B cell (primary cell): ENCODE measurements at regions of chr20 and their contacts with region 1.

Region 1: GRCh38 chr20:63864847-63865640 is at the start of gene TPD52L2:
- DNase-seq: peak; percentile 98
- ATAC-seq: peak; percentile 82
- H3K4me3 ChIP-seq: peak within 1 kb of the TSS; percentile 69 to 97 (median 86)
- H3K4me3 Mint-ChIP-seq: peak within 1 kb of the TSS; percentile 94
- H3K27ac ChIP-seq: peak within 1 kb of the TSS; percentile 89 to 90
- H3K27ac Mint-ChIP-seq: peak within 1 kb of the TSS; percentile 97
- H3K4me1 ChIP-seq: peaks cover 16 to 20% of the 10 kb centered on the region in 2 donors
- H3K4me1 Mint-ChIP-seq: peaks cover 23% of the 10 kb centered on the region
- H3K27me3 ChIP-seq: no peaks in the 10 kb centered on the region
- H3K27me3 Mint-ChIP-seq: no peaks in the 10 kb centered on the region
- CTCF ChIP-seq: no peak
- total RNA-seq, gene TPD52L2: 41.1 and 41.3 TPM in 2 replicates

Region 2: DNA sequence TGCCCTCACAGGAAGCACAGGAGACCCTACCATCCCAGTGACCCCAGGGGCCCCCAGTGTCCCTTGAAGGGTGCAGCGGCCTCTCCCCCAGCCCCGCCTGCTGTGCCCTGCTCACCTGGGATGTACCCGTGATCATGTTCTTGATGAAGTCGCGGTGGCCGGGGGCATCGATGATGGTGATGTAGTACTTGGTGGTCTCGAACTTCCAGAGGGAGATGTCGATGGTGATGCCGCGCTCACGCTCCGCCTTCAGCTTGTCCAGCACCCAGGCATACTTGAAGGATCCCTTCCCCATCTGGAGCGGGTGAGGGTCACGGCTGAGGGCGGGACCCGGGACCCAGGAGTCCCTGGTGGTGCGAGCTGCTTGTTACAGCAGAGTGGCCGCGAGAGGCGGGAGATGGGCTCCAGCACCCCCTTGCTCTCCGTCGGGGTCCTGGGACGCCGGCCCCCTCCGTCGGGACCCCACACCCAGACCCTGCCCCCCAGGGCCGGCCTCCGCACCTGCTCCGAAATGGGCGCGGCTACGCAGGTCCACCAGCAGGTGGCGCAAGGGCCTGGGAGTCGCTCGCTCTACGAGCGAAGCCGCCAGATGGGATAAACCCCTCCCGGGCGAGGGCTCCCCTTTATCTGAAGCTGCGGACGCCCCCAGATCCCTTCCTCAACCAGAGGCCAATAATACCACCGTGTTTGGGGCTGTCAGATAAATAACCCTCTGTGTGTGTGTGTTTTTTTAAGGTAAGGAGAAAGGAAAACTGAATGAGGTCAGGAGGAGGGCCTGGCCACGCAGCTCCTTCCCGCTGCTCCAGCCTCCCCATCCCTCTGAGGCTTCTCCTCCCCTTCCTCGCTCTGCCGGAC is 369.1 kb before region 1 on chr20:
- CTCF ChIA-PET with region 1: interaction called, 16 read pairs
- POLR2A ChIA-PET with region 1: no interaction called
- intact Hi-C with region 1: loop called (anchors 1 kb)
- DNase-seq: peak; percentile 84
- ATAC-seq: peak; percentile 66
- H3K4me3 ChIP-seq: peak overlapping the region in 4 of 5 experiments; percentile 8 to 40 (median 34)
- H3K4me3 Mint-ChIP-seq: peak overlapping the region; percentile 79
- H3K27ac ChIP-seq: no peak overlapping the region
- H3K27ac Mint-ChIP-seq: no peak overlapping the region
- H3K4me1 ChIP-seq: peaks cover 19 to 26% of the 10 kb centered on the region in 2 donors
- H3K4me1 Mint-ChIP-seq: peaks cover 7% of the 10 kb centered on the region
- H3K27me3 ChIP-seq: peaks cover 0 to 40% (median 16%) of the 10 kb centered on the region in 4 experiments
- H3K27me3 Mint-ChIP-seq: peaks cover 11% of the 10 kb centered on the region
- CTCF ChIP-seq: peak; percentile 95

Region 3: GRCh38 chr20:63553227-63553932 is 311.7 kb before region 1 on chr20:
- CTCF ChIA-PET with region 1: no interaction called
- POLR2A ChIA-PET with region 1: no interaction called
- intact Hi-C with region 1: loop called (anchors 1 kb)
- DNase-seq: peak; percentile 96
- ATAC-seq: peak; percentile 75
- H3K4me3 ChIP-seq: peak overlapping the region; percentile 7 to 89 (median 75)
- H3K4me3 Mint-ChIP-seq: peak overlapping the region; percentile 86
- H3K27ac ChIP-seq: peak overlapping the region; percentile 79 to 88
- H3K27ac Mint-ChIP-seq: peak overlapping the region; percentile 89
- H3K4me1 ChIP-seq: peaks cover 36 to 50% of the 10 kb centered on the region in 2 donors
- H3K4me1 Mint-ChIP-seq: peaks cover 50% of the 10 kb centered on the region
- H3K27me3 ChIP-seq: peaks cover 0 to 5% (median under 1%) of the 10 kb centered on the region in 4 experiments
- H3K27me3 Mint-ChIP-seq: no peaks in the 10 kb centered on the region
- CTCF ChIP-seq: no peak

Region 4: DNA sequence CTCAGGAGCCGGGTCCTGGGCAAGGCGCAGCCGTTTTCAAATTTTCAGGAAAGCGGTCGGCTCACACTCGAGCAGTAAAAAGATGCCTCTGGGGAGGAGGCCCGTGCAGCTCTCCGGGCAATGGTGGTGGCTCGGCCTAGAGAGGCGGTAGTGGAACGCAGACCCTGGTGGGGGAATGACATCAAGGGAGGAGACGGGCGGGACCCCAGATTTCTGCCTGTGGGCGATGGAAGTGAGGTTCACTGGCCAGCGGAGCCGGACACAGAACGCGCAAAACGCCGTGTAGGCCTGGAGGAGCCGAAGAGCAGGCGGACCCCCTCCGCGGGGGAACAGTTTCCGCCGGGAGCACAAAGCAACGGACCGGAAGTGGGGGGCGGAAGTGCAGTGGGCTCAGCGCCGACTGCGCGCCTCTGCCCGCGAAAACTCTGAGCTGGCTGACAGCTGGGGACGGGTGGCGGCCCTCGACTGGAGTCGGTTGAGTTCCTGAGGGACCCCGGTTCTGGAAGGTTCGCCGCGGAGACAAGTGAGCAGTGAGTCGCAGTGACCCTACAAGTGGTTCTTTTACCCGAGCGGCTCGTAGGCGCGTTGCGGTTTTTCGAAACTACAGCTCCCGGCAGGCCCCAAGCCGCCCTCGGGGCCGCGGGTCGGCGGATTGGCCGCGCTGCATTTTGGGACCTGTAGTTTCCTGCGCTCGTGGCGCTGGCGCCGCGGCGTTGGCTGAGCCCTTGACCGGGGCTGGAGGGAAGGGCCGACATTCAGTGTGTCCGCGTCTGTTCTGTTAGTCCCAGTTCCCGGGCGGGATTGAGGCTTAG is 206.9 kb before region 1 on chr20 and contains the start of gene RTEL1:
- CTCF ChIA-PET with region 1: interaction called, 7 read pairs
- POLR2A ChIA-PET with region 1: interaction called, 6 read pairs
- intact Hi-C with region 1: loop called (anchors 1 kb)
- DNase-seq: peak; percentile 95
- ATAC-seq: peak; percentile 91
- H3K4me3 ChIP-seq: peak within 1 kb of the TSS; percentile 51 to 94 (median 84)
- H3K4me3 Mint-ChIP-seq: peak within 1 kb of the TSS; percentile 98
- H3K27ac ChIP-seq: peak within 1 kb of the TSS; percentile 47 to 70
- H3K27ac Mint-ChIP-seq: peak within 1 kb of the TSS; percentile 96
- H3K4me1 ChIP-seq: peaks cover 21 to 36% of the 10 kb centered on the region in 2 donors
- H3K4me1 Mint-ChIP-seq: peaks cover 21% of the 10 kb centered on the region
- H3K27me3 ChIP-seq: peaks cover 0 to 28% (median 10%) of the 10 kb centered on the region in 4 experiments
- H3K27me3 Mint-ChIP-seq: no peaks in the 10 kb centered on the region
- CTCF ChIP-seq: no peak
- total RNA-seq, gene RTEL1: 32.6 and 35.3 TPM in 2 replicates

Region 5: DNA sequence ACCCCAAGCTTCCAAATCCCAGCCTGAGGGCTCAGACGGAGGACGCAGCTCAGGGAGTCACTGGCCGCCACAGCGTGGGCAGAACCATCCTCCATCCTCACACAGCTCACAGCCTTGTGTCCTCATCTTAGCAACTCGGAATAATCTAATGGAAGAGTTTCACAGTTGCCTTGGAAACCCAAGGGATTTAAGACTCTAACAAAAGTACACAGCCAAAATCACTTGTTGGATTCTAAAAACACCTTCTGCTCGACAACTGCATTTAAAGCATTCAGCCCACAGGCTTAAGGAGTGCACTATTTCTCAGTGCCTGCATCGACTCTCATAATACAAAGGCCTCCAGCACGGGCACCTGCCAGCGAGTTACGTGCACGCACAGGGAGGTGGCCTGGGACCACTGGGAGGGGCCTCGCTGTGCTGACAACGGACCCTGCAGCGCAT is 79.3 kb before region 1 on chr20:
- CTCF ChIA-PET with region 1: interaction called, 29 read pairs
- POLR2A ChIA-PET with region 1: no interaction called
- intact Hi-C with region 1: loop called (anchors 1 kb)
- DNase-seq: no peak
- ATAC-seq: no peak
- H3K4me3 ChIP-seq: no peak overlapping the region
- H3K4me3 Mint-ChIP-seq: no peak overlapping the region
- H3K27ac ChIP-seq: no peak overlapping the region
- H3K27ac Mint-ChIP-seq: no peak overlapping the region
- H3K4me1 ChIP-seq: no peaks in the 10 kb centered on the region
- H3K4me1 Mint-ChIP-seq: peaks cover 3% of the 10 kb centered on the region
- H3K27me3 ChIP-seq: no peaks in the 10 kb centered on the region
- H3K27me3 Mint-ChIP-seq: no peaks in the 10 kb centered on the region
- CTCF ChIP-seq: no peak

Region 6: GRCh38 chr20:63810730-63811494 is 54.1 kb before region 1 on chr20:
- CTCF ChIA-PET with region 1: no interaction called
- POLR2A ChIA-PET with region 1: no interaction called
- intact Hi-C with region 1: no loop called
- DNase-seq: no peak
- ATAC-seq: no peak
- H3K4me3 ChIP-seq: no peak overlapping the region
- H3K4me3 Mint-ChIP-seq: no peak overlapping the region
- H3K27ac ChIP-seq: no peak overlapping the region
- H3K27ac Mint-ChIP-seq: no peak overlapping the region
- H3K4me1 ChIP-seq: no peaks in the 10 kb centered on the region
- H3K4me1 Mint-ChIP-seq: no peaks in the 10 kb centered on the region
- H3K27me3 ChIP-seq: no peaks in the 10 kb centered on the region
- H3K27me3 Mint-ChIP-seq: no peaks in the 10 kb centered on the region
- CTCF ChIP-seq: no peak

Region 7: DNA sequence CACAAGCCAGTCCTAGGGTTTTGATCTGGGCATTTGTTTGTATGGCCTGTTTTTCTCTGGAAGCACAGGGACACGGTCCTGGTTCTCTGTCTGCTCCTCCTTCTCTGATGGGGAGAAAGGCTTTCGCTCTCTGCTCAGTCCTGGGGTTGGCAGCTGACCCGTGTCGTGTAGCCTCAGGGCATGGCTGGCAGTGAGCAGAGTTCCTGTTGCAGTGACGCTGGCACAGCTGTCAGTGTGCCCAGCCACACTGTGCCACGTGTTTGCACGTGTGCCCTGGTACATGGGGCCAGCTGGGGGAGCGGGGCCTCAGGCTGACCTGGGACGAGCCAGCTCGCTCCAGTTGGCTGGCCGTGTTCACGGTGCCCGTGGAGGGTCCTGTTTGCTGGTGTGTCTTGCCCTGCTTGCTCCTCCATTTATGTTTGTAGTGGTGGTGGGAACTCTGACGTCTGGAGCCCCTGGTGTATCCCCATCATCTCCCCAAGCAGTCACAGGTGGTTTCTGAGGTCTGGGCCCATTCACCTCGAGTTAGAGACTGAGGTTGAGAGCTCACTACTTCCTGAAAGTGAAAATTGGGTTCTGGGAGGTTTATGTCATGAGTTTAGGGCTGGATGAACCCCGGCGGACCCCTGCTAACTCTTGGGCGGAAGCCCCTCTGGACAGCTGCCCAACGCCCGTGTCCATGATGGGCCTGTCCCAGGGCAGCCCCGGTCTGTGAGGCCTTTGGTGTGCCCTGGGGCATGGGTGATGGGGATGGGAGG is 19.6 kb after region 1 on chr20:
- CTCF ChIA-PET with region 1: no interaction called
- POLR2A ChIA-PET with region 1: no interaction called
- intact Hi-C with region 1: no loop called
- DNase-seq: no peak
- ATAC-seq: no peak
- H3K4me3 ChIP-seq: no peak overlapping the region
- H3K4me3 Mint-ChIP-seq: no peak overlapping the region
- H3K27ac ChIP-seq: no peak overlapping the region
- H3K27ac Mint-ChIP-seq: no peak overlapping the region
- H3K4me1 ChIP-seq: no peaks in the 10 kb centered on the region
- H3K4me1 Mint-ChIP-seq: no peaks in the 10 kb centered on the region
- H3K27me3 ChIP-seq: no peaks in the 10 kb centered on the region
- H3K27me3 Mint-ChIP-seq: no peaks in the 10 kb centered on the region
- CTCF ChIP-seq: no peak

Region 8: DNA sequence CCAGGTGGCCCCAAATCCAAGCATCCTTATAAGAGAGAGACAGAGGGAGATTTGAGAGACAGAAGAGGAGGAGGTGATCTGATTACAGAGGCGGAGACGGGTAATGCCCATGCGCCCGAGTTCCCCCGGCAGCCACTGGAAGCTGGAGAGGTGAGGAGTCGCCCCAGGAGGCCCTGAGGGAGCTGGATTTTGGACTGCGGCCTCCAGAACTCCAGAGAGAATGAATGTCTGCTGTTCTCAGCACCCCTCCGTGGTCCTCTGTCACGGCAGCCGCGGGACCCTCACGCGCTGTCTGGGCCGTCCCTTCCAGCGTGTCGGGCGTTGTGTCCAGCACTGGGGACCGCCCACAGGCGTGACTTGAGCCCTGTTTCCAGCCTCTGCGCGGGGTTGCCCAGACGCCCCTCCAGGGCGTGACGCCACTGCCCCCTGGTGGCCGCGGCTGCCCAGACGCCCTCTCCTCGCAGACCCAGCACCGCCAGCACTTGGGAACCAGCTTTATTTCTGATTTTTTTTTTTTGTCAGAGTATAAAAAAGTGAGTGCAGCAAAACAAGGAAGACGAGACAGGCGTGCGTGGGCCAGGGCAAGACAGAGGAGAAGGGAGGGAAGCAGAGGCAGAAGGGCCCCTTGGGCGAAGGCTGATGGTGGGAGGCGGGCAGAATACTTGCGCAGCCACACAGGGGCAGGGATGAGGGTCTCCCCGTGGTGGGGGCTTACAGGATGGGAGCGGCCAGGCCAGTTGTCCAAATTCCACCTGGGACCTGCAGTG is 108.8 kb after region 1 on chr20:
- CTCF ChIA-PET with region 1: interaction called, 11 read pairs
- POLR2A ChIA-PET with region 1: no interaction called
- intact Hi-C with region 1: no loop called
- DNase-seq: peak; percentile 83
- ATAC-seq: peak; percentile 67
- H3K4me3 ChIP-seq: no peak overlapping the region
- H3K4me3 Mint-ChIP-seq: no peak overlapping the region
- H3K27ac ChIP-seq: no peak overlapping the region
- H3K27ac Mint-ChIP-seq: no peak overlapping the region
- H3K4me1 ChIP-seq: peaks cover 20 to 32% of the 10 kb centered on the region in 2 donors
- H3K4me1 Mint-ChIP-seq: peaks cover 26% of the 10 kb centered on the region
- H3K27me3 ChIP-seq: no peaks in the 10 kb centered on the region
- H3K27me3 Mint-ChIP-seq: no peaks in the 10 kb centered on the region
- CTCF ChIP-seq: peak; percentile 98